Breast epithelium (tissue), 4 donors: ENCODE measurements at regions of chr9 and their contacts with region 1.

Region 1: DNA sequence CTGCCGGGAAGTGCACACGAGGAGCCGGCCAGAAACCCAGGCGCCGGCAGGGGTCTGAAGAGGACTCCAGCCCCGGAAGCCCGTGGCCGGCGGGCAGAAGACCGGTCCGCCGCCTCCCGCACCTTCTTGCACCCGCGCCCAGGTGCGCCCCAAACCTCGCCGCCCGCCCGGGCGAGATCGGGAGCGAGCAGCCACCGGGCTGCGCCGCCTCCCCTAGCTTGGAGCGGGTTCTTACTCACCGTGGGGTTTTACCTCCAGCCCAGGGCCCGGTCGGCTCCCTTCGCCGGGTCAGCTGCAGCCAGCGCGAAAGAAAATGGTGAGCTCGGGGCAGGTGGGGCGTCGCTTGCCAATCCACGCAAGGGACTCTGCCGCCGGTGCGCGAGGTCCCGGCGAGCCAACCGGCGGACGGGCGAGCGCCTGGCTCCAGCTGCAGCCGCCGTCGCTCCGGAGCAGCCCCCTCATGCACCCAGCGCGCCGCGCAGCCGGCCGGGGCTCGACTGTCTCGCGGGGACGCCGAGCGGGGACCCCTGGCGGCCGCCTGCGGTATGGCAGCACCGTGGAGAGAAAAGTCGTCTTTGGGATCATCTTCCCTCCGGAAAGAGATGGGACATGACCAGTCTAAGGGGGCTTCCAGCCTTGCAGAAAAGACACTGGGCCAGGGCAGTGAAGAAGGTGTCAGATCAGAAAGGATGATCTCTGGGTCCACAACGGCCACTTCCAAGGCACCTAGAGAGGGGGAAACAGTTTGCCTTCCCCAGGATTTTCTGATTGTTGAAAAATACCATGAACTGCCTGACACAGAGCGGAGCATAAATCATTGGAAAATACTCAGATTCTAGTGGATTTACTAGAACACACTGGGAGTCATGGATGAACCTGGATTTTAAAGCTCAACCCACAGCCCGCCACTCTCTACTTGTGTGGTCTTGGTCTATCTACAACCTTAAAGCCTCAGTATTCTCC is at the start of gene MOB3B:
- DNase-seq: peak; percentile 69 to 80
- H3K4me3 ChIP-seq: peak within 1 kb of the TSS; percentile 84 to 94 (median 93)
- H3K27ac ChIP-seq: peak within 1 kb of the TSS; percentile 97 to 99
- H3K4me1 ChIP-seq: peaks cover 0 to 4% of the 10 kb centered on the region in 2 donors
- H3K27me3 ChIP-seq: no peaks in the 10 kb centered on the region
- CTCF ChIP-seq: peak; percentile 76 to 93 (median 77)
- POLR2A ChIP-seq: no peak
- total RNA-seq, gene MOB3B: 12.8 to 19.3 (median 13.1) TPM

Region 2: DNA sequence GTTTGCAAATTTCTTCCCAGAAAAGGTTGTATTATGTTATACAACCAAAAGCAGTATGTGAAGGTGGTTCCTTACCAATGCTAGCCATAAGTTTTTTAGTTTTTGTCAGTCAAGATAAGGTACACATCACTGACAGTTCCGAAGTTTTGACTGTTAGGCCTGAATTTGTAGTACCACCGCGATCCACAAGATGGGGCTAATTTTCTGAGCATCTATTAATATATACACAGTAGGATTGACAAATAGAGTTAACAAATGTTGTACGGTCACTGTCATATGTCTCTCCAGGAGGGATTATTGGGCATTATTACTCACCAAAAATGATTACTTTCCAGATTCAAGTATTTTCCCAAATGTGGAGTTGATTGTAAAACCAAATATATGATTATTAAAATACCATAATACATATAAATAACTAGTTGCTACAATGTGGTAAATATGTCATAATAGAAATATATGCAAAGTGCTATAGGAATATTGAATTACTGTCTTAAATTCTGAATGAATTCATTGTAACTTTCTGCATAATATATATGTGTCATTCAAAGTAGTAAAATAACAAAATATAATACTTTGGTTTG is 495.7 kb before region 1 on chr9:
- intact Hi-C with region 1: loop called (anchors 5 kb)
- DNase-seq: no peak
- H3K4me3 ChIP-seq: no peak overlapping the region
- H3K27ac ChIP-seq: no peak overlapping the region
- H3K4me1 ChIP-seq: no peaks in the 10 kb centered on the region
- H3K27me3 ChIP-seq: no peaks in the 10 kb centered on the region
- CTCF ChIP-seq: peak; percentile 50 to 76 (median 55)
- POLR2A ChIP-seq: no peak

Region 3: GRCh38 chr9:27441741-27442070 is 87.9 kb before region 1 on chr9:
- intact Hi-C with region 1: loop called (anchors 10 kb)
- DNase-seq: no peak
- H3K4me3 ChIP-seq: no peak overlapping the region
- H3K27ac ChIP-seq: no peak overlapping the region
- H3K4me1 ChIP-seq: no peaks in the 10 kb centered on the region
- H3K27me3 ChIP-seq: no peaks in the 10 kb centered on the region
- CTCF ChIP-seq: no peak
- POLR2A ChIP-seq: no peak